ENCODE measurements at regions of chr17 and their contacts with region 1.

Region 1: DNA sequence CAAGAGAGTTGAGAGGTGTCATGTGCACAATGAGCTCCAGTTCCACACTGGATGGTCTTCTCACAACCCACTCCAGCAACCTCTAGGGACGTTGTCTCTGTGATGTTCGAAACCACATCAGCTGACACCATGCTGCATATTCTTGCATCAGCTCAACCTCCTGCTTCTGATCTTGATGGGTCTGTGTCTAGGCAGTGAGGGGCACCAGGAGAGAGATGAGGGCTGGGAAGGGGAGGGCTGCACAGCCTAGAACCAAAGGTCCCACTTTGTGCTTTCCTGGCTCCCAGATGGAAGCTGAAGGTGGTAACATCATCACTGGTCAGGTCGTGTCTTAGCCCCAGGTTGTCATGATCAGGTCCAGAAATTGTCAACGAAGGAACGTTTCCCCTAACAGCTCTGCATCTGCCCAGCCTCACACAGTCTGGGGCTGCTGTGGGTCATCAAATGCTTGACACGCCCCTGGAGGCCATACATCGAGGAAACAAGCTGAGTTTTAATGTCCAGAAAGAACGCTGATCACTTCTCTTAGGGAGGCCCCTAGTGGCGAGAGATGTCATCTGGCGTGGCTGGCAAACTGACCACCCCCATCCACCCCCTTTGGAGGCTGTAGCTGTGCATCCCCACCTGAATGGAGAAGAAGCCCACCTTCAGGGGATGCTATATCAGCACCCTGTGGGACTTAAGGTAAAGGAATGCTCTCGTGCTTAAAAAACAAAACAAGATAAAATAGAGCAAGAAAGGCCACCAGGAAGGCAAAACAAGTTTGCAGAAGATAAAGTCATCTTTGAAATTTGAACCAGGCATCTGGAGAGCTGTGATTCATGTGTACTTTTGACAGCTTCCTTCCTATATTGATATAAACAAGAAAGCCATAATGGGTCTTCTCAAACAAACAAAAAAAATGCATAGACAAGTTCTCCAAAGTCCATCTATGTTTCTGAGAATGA is 58.3 kb downstream of the WIPI1 start:
- DNase-seq: peak; percentile 46
- H3K4me3 Mint-ChIP-seq: peak overlapping the region; percentile 8
- H3K27ac Mint-ChIP-seq: peak overlapping the region; percentile 69
- H3K4me1 Mint-ChIP-seq: peaks cover 47% of the 10 kb centered on the region
- H3K27me3 Mint-ChIP-seq: no peaks in the 10 kb centered on the region

Region 2: GRCh38 chr17:68260051-68260762 is 138.8 kb before region 1 on chr17:
- CTCF ChIA-PET with region 1: interaction called, 23 read pairs
- DNase-seq: no peak
- H3K4me3 Mint-ChIP-seq: no peak overlapping the region
- H3K27ac Mint-ChIP-seq: peak overlapping the region; percentile 71
- H3K4me1 Mint-ChIP-seq: peaks cover 75% of the 10 kb centered on the region
- H3K27me3 Mint-ChIP-seq: no peaks in the 10 kb centered on the region

Region 3: DNA sequence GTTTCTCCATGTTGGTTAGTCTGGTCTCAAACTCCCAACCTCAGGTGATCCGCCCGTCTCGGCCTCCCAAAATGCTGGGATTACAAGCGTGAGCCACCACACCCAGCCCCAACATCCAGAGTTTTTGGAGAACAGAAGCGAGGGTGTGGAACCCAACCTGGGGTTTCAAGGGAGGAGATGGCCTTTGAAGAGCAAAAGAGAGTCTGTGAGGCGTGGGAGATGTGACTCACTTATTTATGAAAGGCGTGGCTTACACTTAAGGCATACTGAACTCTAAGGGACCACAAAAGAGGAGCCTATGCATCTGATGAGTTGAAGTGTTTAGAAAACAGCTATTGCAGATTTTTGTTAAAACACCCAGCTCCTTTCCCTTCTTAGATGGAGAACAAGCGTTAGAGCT is 88.8 kb before region 1 on chr17:
- CTCF ChIA-PET with region 1: interaction called, 10 read pairs
- DNase-seq: peak; percentile 63
- H3K4me3 Mint-ChIP-seq: no peak overlapping the region
- H3K27ac Mint-ChIP-seq: peak overlapping the region; percentile 78
- H3K4me1 Mint-ChIP-seq: peaks cover 64% of the 10 kb centered on the region
- H3K27me3 Mint-ChIP-seq: no peaks in the 10 kb centered on the region

Region 4: DNA sequence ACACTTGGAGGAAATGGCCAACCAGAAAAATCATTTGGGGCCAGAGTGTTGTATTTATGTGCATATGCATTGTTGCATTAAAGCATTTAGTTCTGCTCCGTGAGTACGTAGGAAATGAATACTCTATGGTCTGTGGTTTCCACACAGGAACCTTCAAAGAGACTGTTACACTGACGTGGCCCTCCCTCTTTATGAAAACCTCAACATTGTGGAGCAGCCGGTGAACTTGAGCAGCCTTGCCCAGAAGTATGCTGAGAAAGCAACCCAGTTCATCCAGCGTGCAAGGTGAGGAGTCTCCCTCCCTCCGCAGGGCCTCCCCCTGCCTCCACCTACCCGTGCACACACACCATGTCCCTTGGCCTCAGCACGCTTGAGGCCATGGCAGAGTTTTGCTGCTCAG is 42.4 kb before region 1 on chr17:
- CTCF ChIA-PET with region 1: interaction called, 17 read pairs
- DNase-seq: peak; percentile 80
- H3K4me3 Mint-ChIP-seq: peak overlapping the region; percentile 38
- H3K27ac Mint-ChIP-seq: peak overlapping the region; percentile 86
- H3K4me1 Mint-ChIP-seq: peaks cover 72% of the 10 kb centered on the region
- H3K27me3 Mint-ChIP-seq: no peaks in the 10 kb centered on the region

Region 5: GRCh38 chr17:68435876-68436842 is 37.2 kb after region 1 on chr17:
- CTCF ChIA-PET with region 1: interaction called, 14 read pairs
- DNase-seq: peak; percentile 91
- H3K4me3 Mint-ChIP-seq: peak overlapping the region; percentile 53
- H3K27ac Mint-ChIP-seq: peak overlapping the region; percentile 90
- H3K4me1 Mint-ChIP-seq: peaks cover 80% of the 10 kb centered on the region
- H3K27me3 Mint-ChIP-seq: no peaks in the 10 kb centered on the region

Region 6: DNA sequence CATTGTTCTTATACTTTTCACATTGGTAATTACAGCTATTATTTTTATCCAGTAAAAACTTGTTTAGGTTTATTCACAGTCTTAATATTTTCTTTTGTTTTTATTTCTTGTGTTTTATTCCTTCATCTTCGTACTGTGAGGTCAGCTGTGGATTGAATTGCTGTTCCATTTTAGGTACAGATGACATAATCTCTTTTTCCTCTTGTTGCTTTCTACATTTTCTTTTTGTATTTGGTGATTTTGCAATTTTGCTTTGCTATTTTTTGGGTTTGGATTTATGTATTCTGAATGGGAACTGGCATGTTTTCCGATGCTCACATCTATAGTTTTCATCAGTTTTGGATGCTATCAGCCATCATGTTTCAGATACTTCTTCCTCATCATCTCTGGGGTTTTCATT is 80.2 kb after region 1 on chr17:
- CTCF ChIA-PET with region 1: no interaction called
- DNase-seq: no peak
- H3K4me3 Mint-ChIP-seq: no peak overlapping the region
- H3K27ac Mint-ChIP-seq: no peak overlapping the region
- H3K4me1 Mint-ChIP-seq: peaks cover 3% of the 10 kb centered on the region
- H3K27me3 Mint-ChIP-seq: peaks cover 37% of the 10 kb centered on the region

Region 7: DNA sequence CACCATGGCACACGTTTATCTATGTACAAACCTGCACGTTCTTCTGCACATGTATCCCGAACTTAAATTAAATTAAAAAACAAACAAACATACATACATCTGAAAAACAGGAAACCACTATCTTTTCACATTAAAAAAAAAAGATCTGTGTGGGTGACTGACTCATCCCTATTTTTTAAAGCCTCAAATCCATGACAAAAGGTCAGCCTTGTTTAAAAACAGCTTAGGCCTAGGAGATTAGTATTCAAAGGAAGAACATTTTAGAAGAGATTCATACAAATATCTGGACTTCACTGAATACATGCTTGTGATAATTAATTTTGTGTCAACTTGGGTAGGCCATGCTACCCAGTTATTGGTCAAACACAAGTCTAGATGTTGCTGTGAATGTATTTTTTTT is 108.6 kb after region 1 on chr17:
- CTCF ChIA-PET with region 1: no interaction called
- DNase-seq: no peak
- H3K4me3 Mint-ChIP-seq: no peak overlapping the region
- H3K27ac Mint-ChIP-seq: no peak overlapping the region
- H3K4me1 Mint-ChIP-seq: peaks cover 36% of the 10 kb centered on the region
- H3K27me3 Mint-ChIP-seq: no peaks in the 10 kb centered on the region

Region 8: DNA sequence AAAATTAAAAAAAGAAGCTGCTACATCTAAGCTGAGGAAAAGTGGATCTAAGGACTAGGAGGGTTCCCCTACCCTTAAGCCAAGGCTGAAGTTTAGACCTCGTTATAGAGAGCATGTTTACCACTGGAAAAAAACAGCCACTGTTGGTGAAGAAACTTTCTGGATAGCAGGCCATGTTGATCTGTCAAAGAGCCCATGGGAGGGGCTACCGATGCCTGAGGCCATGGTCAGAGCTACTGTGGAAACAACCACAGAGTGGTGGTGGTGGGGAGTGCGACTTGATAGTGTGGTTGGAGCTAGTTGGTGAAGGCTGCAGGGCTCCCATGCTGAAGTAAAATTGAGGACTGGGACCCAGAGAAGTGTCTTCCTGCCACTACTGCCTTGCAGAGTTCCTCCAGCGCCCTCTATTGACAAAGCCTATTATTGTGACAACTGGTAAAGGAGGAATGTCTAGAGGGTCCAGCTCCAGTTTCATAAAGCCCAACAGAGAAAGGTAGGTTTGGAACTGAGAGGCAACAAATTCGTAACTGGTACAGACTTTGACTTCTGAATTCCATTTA is 214.9 kb after region 1 on chr17:
- CTCF ChIA-PET with region 1: no interaction called
- DNase-seq: peak; percentile 49
- H3K4me3 Mint-ChIP-seq: no peak overlapping the region
- H3K27ac Mint-ChIP-seq: no peak overlapping the region
- H3K4me1 Mint-ChIP-seq: no peaks in the 10 kb centered on the region
- H3K27me3 Mint-ChIP-seq: peaks cover 22% of the 10 kb centered on the region